Activated B cell treated with CpG ODN at 0.5 μM for 24 hours (primary cell): ENCODE measurements at regions of chr11 and their contacts with region 1.

Region 1: GRCh38 chr11:117817368-117818040 is 7.0 kb downstream of the FXYD2 start:
- DNase-seq: peak; percentile 81
- ATAC-seq: peak; percentile 17
- H3K4me3 Mint-ChIP-seq: peak overlapping the region; percentile 88
- H3K27ac Mint-ChIP-seq: peak overlapping the region; percentile 97
- H3K4me1 Mint-ChIP-seq: peaks cover 75% of the 10 kb centered on the region
- H3K27me3 Mint-ChIP-seq: peaks cover 3% of the 10 kb centered on the region
- CTCF ChIP-seq: peak; percentile 80

Region 2: GRCh38 chr11:117232092-117232878 is 585.2 kb before region 1 on chr11 and contains the start of gene RNF214:
- CTCF ChIA-PET with region 1: interaction called, 4 read pairs
- POLR2A ChIA-PET with region 1: interaction called, 13 read pairs
- intact Hi-C with region 1: loop called (anchors 2 kb)
- DNase-seq: peak; percentile 82
- ATAC-seq: peak; percentile 74
- H3K4me3 Mint-ChIP-seq: peak within 1 kb of the TSS; percentile 100
- H3K27ac Mint-ChIP-seq: peak within 1 kb of the TSS; percentile 100
- H3K4me1 Mint-ChIP-seq: peaks cover 43% of the 10 kb centered on the region
- H3K27me3 Mint-ChIP-seq: no peaks in the 10 kb centered on the region
- CTCF ChIP-seq: peak; percentile 69
- total RNA-seq, gene RNF214: 18.7 and 22.3 TPM in 2 replicates

Region 3: DNA sequence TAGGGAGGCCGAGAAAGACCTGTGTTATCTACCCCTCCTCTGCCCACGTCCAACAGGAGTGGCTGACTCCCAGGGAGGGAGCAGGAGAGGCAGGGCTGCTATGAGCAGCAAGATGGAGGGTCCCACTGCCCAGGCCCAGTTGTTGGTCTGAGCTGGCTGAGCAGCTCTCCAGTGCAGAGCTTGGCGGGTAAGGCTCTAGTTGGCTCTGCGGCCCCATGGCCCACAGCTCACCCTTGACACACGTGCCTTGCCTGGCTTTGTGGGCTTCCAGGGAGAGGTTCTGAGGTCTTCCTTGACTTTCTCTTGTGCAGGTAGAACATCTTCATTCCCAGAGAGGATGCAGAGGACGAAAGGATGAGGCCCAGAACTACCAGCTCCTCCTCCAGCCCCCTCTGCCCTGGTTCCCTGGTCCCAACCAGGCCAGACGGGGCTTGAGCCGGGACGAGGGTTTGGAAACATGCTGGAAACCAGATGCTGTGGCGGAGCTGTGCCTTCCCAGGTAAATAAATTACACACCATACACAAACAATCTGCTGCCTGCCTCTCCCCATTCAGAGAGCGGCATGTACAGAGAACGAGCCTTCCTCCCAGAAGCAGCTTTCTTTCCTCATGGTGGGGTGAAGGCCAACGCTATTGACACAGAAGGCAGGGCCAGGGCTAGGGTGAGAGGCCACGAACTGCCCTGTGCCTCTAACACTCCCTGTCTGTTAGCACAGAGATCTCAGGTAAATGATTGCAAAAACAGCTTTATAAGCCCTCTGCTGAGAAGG is 68.5 kb before region 1 on chr11:
- CTCF ChIA-PET with region 1: no interaction called
- POLR2A ChIA-PET with region 1: no interaction called
- intact Hi-C with region 1: no loop called
- DNase-seq: no peak
- ATAC-seq: no peak
- H3K4me3 Mint-ChIP-seq: no peak overlapping the region
- H3K27ac Mint-ChIP-seq: no peak overlapping the region
- H3K4me1 Mint-ChIP-seq: no peaks in the 10 kb centered on the region
- H3K27me3 Mint-ChIP-seq: peaks cover 4% of the 10 kb centered on the region
- CTCF ChIP-seq: no peak

Region 4: GRCh38 chr11:117828611-117829368 is 11.3 kb after region 1 on chr11:
- CTCF ChIA-PET with region 1: interaction called, 13 read pairs
- POLR2A ChIA-PET with region 1: interaction called, 101 read pairs
- intact Hi-C with region 1: loop called (anchors 1 kb)
- DNase-seq: peak; percentile 79
- ATAC-seq: peak; percentile 89
- H3K4me3 Mint-ChIP-seq: peak overlapping the region; percentile 44
- H3K27ac Mint-ChIP-seq: peak overlapping the region; percentile 80
- H3K4me1 Mint-ChIP-seq: peaks cover 51% of the 10 kb centered on the region
- H3K27me3 Mint-ChIP-seq: peaks cover 23% of the 10 kb centered on the region
- CTCF ChIP-seq: no peak

Region 5: DNA sequence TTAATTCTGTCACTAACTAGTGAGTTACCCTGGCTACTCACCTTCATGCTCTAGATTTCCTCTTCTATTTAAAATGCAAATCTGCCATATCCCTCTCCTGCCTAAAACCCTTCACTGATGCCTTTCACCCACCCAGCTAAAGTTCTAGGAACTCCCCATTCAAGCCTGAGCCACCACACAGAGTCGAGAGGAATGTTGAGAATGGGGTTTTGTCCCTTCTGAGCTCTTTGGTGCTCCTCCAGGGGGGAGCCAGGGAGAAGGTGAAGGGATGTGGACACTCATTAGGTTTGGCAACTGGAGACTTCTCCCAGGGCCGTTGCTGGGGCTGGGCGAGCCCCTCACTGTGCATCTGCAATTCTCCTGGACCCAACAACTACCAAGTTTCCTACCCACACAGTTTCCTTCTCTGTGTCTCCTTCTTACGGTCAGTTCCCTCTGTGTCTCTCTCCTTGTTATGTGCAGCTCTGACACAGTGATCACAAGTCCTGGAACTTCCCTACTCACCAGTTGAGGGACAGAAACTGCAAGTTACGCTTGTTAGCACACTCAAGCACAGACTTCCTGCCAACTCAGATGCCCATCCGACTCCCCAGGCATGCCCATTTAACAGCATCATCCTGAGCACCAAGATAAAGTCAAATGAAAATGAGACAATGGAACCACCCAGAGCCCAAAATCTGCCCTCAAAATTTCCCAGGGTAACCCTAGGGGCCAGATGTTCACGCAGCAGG is 162.1 kb after region 1 on chr11:
- CTCF ChIA-PET with region 1: no interaction called
- POLR2A ChIA-PET with region 1: interaction called, 73 read pairs
- intact Hi-C with region 1: no loop called
- DNase-seq: no peak
- ATAC-seq: peak; percentile 74
- H3K4me3 Mint-ChIP-seq: peak overlapping the region; percentile 64
- H3K27ac Mint-ChIP-seq: peak overlapping the region; percentile 87
- H3K4me1 Mint-ChIP-seq: peaks cover 75% of the 10 kb centered on the region
- H3K27me3 Mint-ChIP-seq: no peaks in the 10 kb centered on the region
- CTCF ChIP-seq: no peak

Region 6: DNA sequence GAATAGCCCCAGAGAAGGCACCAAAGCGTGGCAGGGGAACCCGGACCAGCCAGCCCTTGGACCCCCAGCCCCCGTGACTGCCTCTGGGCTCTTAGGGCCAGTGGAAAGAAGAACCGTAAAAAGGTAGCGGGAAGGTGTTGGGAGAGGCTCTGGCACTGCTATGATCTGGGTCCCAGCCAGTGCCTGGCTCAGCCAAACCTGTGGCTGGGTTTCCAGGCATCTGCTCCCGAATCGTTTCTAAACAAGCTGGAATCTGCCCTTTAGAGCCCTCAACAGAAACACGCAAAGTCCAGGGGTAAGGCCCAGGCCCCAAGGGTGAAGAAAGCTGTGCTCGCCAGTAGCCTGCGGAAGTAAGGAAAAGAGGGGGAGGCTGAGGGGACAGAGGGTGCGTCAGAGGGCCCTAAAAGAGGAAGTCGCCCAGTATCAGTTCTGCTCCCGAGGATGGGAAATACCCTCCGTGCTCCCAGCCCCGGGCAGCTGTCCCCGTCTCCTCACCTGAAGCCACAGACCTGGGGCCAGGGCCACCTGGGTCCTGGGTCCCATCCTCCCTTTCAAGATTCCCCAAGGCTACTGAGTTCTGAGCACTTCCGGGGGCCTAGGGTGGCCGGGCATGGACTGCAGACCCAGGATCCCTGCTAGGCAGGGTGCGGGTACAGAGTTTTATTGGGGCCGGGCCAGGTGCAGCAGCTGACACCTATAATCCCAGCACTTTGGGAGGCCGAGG is 193.4 kb after region 1 on chr11:
- CTCF ChIA-PET with region 1: interaction called, 4 read pairs
- POLR2A ChIA-PET with region 1: interaction called, 132 read pairs
- intact Hi-C with region 1: loop called (anchors 1 kb)
- DNase-seq: peak; percentile 77
- ATAC-seq: peak; percentile 67
- H3K4me3 Mint-ChIP-seq: peak overlapping the region; percentile 66
- H3K27ac Mint-ChIP-seq: peak overlapping the region; percentile 98
- H3K4me1 Mint-ChIP-seq: peaks cover 100% of the 10 kb centered on the region
- H3K27me3 Mint-ChIP-seq: no peaks in the 10 kb centered on the region
- CTCF ChIP-seq: no peak

Region 7: DNA sequence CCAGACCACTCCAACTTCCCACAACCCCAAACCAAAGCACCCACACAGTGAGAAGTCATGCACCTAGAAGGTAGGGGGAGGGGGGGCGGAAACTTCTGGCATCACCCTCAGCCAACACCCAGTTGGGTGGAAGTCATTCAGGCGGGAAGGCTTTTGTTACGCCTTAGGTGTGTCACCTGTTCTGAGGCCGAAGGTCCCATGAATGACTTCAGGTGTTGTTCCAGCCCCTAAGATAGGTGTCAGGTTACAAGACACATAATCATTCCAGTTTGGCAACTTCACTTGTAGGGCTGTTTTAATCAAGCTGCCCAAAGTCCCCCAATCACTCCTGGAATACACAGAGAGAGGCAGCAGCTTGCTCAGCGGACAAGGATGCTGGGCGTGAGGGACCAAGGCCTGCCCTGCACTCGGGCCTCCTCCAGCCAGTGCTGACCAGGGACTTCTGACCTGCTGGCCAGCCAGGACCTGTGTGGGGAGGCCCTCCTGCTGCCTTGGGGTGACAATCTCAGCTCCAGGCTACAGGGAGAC is 259.3 kb after region 1 on chr11 and contains the start of gene TMPRSS4:
- CTCF ChIA-PET with region 1: no interaction called
- POLR2A ChIA-PET with region 1: no interaction called
- intact Hi-C with region 1: no loop called
- DNase-seq: no peak
- ATAC-seq: no peak
- H3K4me3 Mint-ChIP-seq: no peak within 1 kb of the TSS
- H3K27ac Mint-ChIP-seq: no peak within 1 kb of the TSS
- H3K4me1 Mint-ChIP-seq: no peaks in the 10 kb centered on the region
- H3K27me3 Mint-ChIP-seq: peaks cover 26% of the 10 kb centered on the region
- CTCF ChIP-seq: no peak
- total RNA-seq, gene TMPRSS4: not detected in 2 replicates

Region 8: DNA sequence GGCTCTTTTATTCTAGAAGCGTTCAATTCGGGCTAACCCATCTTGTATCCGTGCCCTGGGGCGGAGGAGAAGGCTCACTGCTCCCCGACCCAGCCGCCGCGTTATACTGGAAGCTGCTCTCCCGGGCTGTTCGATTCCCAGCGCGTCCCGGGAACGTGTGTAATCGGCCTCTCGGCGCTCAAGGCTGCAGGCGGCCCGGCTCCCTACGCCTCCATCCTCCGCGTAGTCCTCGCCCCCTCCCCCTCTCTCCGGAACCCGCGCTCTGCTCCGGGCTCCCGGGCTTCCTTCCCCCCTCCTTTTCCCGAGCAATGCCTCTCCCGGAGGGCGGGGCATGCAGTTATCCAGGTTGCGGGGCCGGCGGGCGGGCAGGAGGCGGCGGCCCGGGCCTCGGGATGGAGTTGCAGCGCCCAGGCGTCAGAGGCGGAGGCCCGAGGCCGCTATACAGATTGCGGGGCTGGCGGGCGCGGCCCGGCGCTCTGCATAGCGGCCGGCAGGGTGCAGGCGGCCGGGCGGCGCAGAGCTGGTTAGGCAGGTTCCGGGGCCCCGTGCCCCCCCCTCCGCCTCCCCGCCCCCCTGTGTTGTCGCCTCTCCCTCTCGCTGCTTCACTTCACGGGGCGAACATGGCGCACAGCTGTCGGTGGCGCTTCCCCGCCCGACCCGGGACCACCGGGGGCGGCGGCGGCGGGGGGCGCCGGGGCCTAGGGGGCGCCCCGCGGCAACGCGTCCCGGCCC is 618.6 kb after region 1 on chr11 and contains the start of gene KMT2A:
- CTCF ChIA-PET with region 1: no interaction called
- POLR2A ChIA-PET with region 1: no interaction called
- intact Hi-C with region 1: loop called (anchors 1 kb)
- DNase-seq: peak; percentile 99
- ATAC-seq: peak; percentile 65
- H3K4me3 Mint-ChIP-seq: peak within 1 kb of the TSS; percentile 94
- H3K27ac Mint-ChIP-seq: peak within 1 kb of the TSS; percentile 94
- H3K4me1 Mint-ChIP-seq: peaks cover 37% of the 10 kb centered on the region
- H3K27me3 Mint-ChIP-seq: no peaks in the 10 kb centered on the region
- CTCF ChIP-seq: no peak
- total RNA-seq, gene KMT2A: 104 and 117 TPM in 2 replicates